ENCODE measurements at regions of chr20 and their contacts with region 1.

Region 1: GRCh38 chr20:25281541-25281991 is 33.7 kb downstream of the PYGB start:
- DNase-seq: peak; percentile 97
- H3K4me3 ChIP-seq: no peak overlapping the region
- H3K27ac ChIP-seq: no peak overlapping the region
- H3K4me1 ChIP-seq: peaks cover 32% of the 10 kb centered on the region
- CTCF ChIP-seq: no peak

Region 2: DNA sequence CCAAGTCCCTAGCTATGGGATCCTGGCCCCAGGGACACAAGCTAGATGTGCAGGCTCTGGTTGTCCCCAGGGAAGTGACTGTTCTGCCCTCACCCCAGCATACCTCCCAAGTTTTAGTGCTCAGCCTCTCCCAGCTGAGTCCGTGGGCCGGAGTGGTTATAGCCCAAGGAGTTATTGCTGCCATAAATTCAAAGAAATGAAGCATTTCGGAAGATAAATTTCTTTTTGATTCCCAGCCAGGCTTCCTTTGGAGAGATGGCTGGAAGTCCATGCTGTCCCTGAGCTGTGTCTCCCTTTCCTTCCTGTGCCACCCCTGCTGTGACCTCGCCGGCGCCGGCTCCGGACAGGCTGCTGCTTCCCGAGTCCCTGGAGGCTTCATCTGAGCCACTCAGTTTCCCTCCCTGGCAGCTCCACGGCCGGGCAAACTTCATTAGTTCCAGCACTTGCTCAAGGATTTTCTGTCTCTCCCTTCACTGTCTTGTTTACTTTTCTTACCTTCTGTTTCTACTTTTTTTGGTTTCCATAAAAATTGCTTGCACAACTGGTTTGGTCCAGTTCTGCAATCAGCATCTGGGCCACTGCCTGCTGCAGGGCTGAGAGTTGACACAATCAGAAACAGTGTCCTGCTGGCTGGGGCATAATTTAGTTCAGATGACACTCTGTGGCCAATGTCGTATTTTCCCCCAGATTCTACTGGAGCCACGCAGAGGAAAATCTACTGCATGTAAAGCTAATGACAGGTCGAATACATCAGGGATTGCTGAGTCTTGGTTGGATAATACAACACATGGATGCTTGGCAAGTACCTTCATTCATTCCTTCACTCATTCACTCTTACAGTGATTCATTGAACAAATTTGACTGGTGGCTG is 586.6 kb before region 1 on chr20:
- CTCF ChIA-PET with region 1: no interaction called
- POLR2A ChIA-PET with region 1: no interaction called
- intact Hi-C with region 1: loop called (anchors 1 kb)
- DNase-seq: no peak
- H3K4me3 ChIP-seq: no peak overlapping the region
- H3K27ac ChIP-seq: no peak overlapping the region
- H3K4me1 ChIP-seq: no peaks in the 10 kb centered on the region
- CTCF ChIP-seq: no peak

Region 3: DNA sequence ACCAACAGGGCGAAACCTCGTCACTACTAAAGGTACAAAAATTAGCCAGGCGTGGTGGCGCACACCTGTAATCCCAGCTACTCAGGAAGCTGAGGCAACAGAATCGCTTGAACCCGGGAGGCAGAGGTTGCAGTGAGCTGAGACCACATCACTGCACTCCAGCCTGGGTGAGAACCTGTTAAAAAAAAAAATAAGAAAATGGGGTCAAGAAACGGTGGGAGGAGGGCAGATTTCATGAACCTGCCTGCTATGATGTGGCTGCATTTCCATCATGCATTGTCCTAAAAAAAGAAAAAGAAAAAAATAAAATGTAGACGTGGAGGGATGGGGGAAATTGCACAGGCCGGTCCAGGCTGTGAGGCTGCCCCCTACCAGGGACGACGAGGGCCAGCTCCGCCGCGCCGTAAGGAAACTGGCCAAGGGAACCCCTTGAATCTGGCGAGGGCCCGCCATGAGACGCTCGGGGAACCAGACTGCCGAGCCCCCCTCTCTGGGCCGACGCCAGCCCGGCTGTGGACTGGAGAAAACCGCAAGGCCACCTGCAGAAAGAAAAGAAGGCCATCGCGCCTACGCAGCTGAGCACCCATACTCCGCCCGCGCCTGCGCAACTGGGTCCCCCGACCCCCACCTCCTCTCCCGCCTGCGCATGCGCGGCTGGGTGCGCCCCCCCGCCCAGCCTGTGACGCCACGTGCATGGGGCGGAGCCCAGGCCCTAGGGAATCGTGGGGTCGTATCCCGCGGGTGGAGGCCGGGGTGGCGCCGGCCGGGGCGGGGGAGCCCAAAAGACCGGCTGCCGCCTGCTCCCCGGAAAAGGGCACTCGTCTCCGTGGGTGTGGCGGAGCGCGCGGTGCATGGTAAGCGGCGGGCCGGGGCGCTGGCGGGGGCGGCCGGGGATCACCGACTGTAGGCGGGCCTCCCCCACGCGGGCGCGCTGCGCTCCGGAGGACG is 86.3 kb before region 1 on chr20 and contains the start of gene ENTPD6:
- CTCF ChIA-PET with region 1: no interaction called
- POLR2A ChIA-PET with region 1: no interaction called
- intact Hi-C with region 1: loop called (anchors 5 kb)
- DNase-seq: no peak
- H3K4me3 ChIP-seq: no peak within 1 kb of the TSS
- H3K27ac ChIP-seq: no peak within 1 kb of the TSS
- H3K4me1 ChIP-seq: no peaks in the 10 kb centered on the region
- CTCF ChIP-seq: no peak
- total RNA-seq, gene ENTPD6: not detected in 2 replicates

Region 4: DNA sequence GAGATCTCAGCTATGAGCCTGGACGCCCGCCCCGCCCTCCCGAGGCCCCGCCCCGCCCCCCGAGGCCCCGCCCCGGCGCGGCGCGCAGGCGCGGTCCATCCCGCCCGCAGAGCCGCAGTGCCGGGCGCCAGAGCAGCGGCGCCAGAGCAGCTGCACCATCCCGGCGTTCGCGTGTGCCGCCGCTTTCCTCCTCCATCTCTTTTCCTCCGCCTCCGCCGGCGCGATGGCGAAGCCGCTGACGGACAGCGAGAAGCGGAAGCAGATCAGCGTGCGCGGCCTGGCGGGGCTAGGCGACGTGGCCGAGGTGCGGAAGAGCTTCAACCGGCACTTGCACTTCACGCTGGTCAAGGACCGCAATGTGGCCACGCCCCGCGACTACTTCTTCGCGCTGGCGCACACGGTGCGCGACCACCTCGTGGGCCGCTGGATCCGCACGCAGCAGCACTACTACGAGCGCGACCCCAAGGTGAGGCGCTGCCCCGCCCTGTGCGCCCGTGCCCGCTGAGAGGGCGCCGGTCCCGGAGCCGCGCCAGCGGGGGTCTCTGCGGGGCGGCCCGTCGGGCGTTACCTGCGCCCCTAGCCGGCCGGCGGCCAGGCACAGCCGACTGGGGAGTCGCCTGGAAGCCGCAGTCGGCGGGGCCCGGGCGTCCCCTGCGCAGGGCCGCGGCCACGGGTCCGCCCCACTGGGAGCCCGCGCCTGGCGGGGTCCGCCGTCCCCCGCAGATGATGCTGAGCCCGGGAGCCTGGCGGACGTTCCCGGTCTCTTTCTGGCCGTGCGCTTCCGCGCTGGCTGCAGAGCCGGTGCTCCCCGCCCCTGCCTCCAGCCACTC is 33.4 kb before region 1 on chr20 and contains the start of gene PYGB:
- CTCF ChIA-PET with region 1: interaction called, 3 read pairs
- POLR2A ChIA-PET with region 1: no interaction called
- intact Hi-C with region 1: loop called (anchors 1 kb)
- DNase-seq: peak; percentile 81
- H3K4me3 ChIP-seq: peak within 1 kb of the TSS; percentile 80
- H3K27ac ChIP-seq: peak within 1 kb of the TSS; percentile 47
- H3K4me1 ChIP-seq: peaks cover 38% of the 10 kb centered on the region
- CTCF ChIP-seq: no peak
- total RNA-seq, gene PYGB: 4.5 and 4.9 TPM in 2 replicates

Region 5: GRCh38 chr20:25318471-25319240 is 37.1 kb after region 1 on chr20:
- CTCF ChIA-PET with region 1: no interaction called
- POLR2A ChIA-PET with region 1: no interaction called
- intact Hi-C with region 1: loop called (anchors 2 kb)
- DNase-seq: peak; percentile 93
- H3K4me3 ChIP-seq: peak overlapping the region; percentile 48
- H3K27ac ChIP-seq: peak overlapping the region; percentile 86
- H3K4me1 ChIP-seq: peaks cover 38% of the 10 kb centered on the region
- CTCF ChIP-seq: no peak; the same call in 1 of the 2 replicates

Region 6: DNA sequence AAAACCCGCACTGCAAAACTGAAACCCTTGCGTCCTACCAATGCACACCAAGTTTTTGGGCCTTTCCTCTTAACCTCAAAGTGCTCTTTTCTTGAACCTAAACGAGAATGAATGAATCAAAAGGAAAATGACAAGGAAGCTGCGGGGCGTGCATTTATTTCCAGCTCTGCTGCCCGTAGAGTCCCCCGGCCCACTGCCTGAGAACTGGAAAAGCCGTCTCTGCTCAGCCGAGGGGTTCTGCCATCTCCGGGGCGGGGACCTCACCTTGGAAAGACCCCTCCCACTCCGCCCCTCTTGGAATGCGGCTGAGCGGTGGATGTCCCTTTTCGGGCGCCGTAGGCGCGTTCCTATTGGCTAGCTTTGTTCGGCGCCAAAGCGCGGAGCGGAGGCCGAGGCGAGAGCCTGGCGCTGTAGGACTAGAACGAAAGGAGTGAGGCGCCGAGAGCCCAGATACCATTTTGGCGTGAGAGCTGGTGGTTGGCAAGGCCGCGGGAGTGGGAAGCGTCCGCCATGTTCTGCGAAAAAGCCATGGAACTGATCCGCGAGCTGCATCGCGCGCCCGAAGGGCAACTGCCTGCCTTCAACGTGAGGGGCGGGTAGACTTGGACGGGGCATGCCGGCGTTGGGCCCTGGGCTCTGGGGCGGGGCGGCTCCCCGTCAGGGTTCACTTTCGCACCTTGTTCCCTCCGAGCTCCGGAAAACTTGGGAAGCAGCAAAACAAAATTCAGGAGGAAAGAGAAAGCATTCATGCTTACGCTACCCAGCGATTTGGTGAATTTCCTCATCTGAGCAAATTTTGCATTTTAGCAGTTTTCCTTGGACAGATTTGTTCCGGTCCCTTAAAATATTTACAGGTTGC is 126.0 kb after region 1 on chr20 and contains the start of gene GINS1:
- CTCF ChIA-PET with region 1: no interaction called
- POLR2A ChIA-PET with region 1: no interaction called
- intact Hi-C with region 1: loop called (anchors 5 kb)
- DNase-seq: peak; percentile 86
- H3K4me3 ChIP-seq: peak within 1 kb of the TSS; percentile 83
- H3K27ac ChIP-seq: peak within 1 kb of the TSS; percentile 58
- H3K4me1 ChIP-seq: peaks cover 16% of the 10 kb centered on the region
- CTCF ChIP-seq: no peak
- total RNA-seq, gene GINS1: 22.8 and 23.0 TPM in 2 replicates

Measured in OCI-LY7 (cell line).